HepG2 (cell line): ENCODE measurements at regions of chr2 and their contacts with region 1.

Region 1: GRCh38 chr2:12716282-12717190 is at the start of gene TRIB2:
- DNase-seq: peak; percentile 41
- ATAC-seq: peak; percentile 82
- H3K4me3 ChIP-seq: peak within 1 kb of the TSS; percentile 53 to 71 (median 55)
- H3K27ac ChIP-seq: no peak within 1 kb of the TSS
- H3K4me1 ChIP-seq: peaks cover 25% of the 10 kb centered on the region
- H3K27me3 ChIP-seq: peaks cover 6 to 45% of the 10 kb centered on the region in 2 experiments
- CTCF ChIP-seq: peak; percentile 48
- EP300 ChIP-seq: no peak
- POLR2A ChIP-seq: no peak
- RAD21 ChIP-seq: 0 out of 2 replicates have a peak, but pooled peaks have one; percentile 11
- total RNA-seq, gene TRIB2: 1.3 and 2.3 TPM in 2 replicates

Region 2: GRCh38 chr2:12169721-12170120 is 546.8 kb before region 1 on chr2:
- CTCF ChIA-PET with region 1: no interaction called
- POLR2A ChIA-PET with region 1: no interaction called
- in situ Hi-C with region 1: no loop called
- intact Hi-C with region 1: loop called (anchors 1 kb)
- DNase-seq: no peak
- ATAC-seq: no peak
- H3K4me3 ChIP-seq: no peak overlapping the region
- H3K27ac ChIP-seq: no peak overlapping the region
- H3K4me1 ChIP-seq: no peaks in the 10 kb centered on the region
- H3K27me3 ChIP-seq: no peaks in the 10 kb centered on the region
- CTCF ChIP-seq: no peak
- EP300 ChIP-seq: no peak
- POLR2A ChIP-seq: no peak
- RAD21 ChIP-seq: no peak

Region 3: GRCh38 chr2:12430407-12431133 is 286.0 kb before region 1 on chr2:
- CTCF ChIA-PET with region 1: no interaction called
- POLR2A ChIA-PET with region 1: no interaction called
- in situ Hi-C with region 1: no loop called
- intact Hi-C with region 1: loop called (anchors 1 kb)
- DNase-seq: no peak
- ATAC-seq: no peak
- H3K4me3 ChIP-seq: no peak overlapping the region
- H3K27ac ChIP-seq: no peak overlapping the region
- H3K4me1 ChIP-seq: no peaks in the 10 kb centered on the region
- H3K27me3 ChIP-seq: no peaks in the 10 kb centered on the region
- CTCF ChIP-seq: no peak
- EP300 ChIP-seq: no peak
- POLR2A ChIP-seq: no peak
- RAD21 ChIP-seq: no peak

Region 4: DNA sequence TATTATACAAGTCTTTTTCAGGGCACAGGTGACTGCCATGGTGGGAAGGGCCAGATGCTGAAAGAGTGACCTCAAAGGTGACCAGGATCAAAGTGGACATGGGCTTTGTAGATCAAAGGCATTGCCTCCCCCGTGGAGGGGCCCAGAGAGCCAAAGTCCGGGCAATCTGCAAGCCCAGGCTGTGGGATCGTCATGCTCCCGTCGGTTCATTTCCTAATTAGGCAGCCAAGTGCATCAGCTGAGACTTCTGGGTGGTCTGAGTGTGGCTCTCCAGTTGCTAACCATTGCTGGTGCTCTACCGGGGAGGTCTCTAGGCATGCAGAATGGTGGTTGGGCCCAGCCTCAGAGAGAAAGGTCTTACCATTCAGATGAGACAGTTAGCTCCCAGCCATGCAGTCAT is 61.8 kb after region 1 on chr2:
- CTCF ChIA-PET with region 1: no interaction called
- POLR2A ChIA-PET with region 1: no interaction called
- in situ Hi-C with region 1: no loop called
- intact Hi-C with region 1: loop called (anchors 2 kb)
- DNase-seq: peak; percentile 75
- ATAC-seq: peak; percentile 95
- H3K4me3 ChIP-seq: no peak overlapping the region
- H3K27ac ChIP-seq: peak overlapping the region; percentile 45
- H3K4me1 ChIP-seq: peaks cover 44% of the 10 kb centered on the region
- H3K27me3 ChIP-seq: no peaks in the 10 kb centered on the region
- CTCF ChIP-seq: no peak
- EP300 ChIP-seq: peak; percentile 80 to 93
- POLR2A ChIP-seq: no peak
- RAD21 ChIP-seq: no peak

Region 5: DNA sequence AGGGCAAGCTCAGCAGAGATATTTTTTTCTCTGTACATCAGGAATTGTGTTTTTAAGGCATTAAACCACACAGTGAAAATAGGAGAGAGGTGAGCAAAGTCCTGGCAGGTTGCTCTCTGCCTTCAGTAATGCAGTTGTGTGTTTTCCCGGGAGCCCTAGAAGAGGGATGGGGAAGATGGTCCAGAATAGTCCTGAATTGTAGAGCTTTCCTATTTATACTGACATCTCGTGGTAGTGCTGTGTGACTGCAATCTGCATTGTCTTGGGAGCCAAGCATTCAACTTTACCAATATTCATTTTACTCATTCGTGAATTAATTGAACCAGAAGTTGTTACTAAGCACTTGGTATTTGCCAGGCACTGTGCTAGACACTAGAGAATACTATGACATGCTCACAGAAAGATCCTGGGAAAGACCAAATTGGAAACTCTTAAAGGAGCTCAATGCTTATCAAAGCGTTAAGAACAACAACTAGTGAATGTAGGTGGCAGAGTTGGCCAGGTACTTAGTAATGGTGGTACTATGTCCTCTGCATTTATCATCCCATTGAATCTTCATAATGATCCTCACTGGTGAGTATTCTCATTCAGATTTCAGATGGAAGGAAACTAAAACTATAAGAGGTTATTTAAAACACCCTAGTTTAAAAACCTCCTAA is 214.8 kb after region 1 on chr2:
- CTCF ChIA-PET with region 1: no interaction called
- POLR2A ChIA-PET with region 1: no interaction called
- in situ Hi-C with region 1: no loop called
- intact Hi-C with region 1: loop called (anchors 1 kb)
- DNase-seq: peak; percentile 3
- ATAC-seq: peak; percentile 92
- H3K4me3 ChIP-seq: no peak overlapping the region
- H3K27ac ChIP-seq: no peak overlapping the region
- H3K4me1 ChIP-seq: no peaks in the 10 kb centered on the region
- H3K27me3 ChIP-seq: no peaks in the 10 kb centered on the region
- CTCF ChIP-seq: peak; percentile 77
- EP300 ChIP-seq: no peak
- POLR2A ChIP-seq: no peak
- RAD21 ChIP-seq: 0 out of 2 replicates have a peak, but pooled peaks have one; percentile 31